K562 (cell line): ENCODE measurements at regions of chr22 and their contacts with region 1.

Region 1: GRCh38 chr22:35627264-35628041 is 10.3 kb upstream of the MB start:
- DNase-seq: peak in 1 of 4 experiments; percentile 35
- ATAC-seq: peak; percentile 39; the same call in 1 of the 3 replicates
- H3K4me3 ChIP-seq: peak overlapping the region; percentile 15; the same call in 1 of the 2 replicates
- H3K27ac ChIP-seq: no peak overlapping the region
- H3K4me1 ChIP-seq: peaks cover 0 to 7% of the 10 kb centered on the region in 2 experiments; a peak in 2 of 5 replicates
- H3K27me3 ChIP-seq: no peaks in the 10 kb centered on the region
- CTCF ChIP-seq: peak; percentile 46 to 65 (median 47); a peak in 5 of 6 replicates
- EP300 ChIP-seq: no peak
- POLR2A ChIP-seq: no peak
- RAD21 ChIP-seq: peak; percentile 33 to 58; a peak in 2 of 4 replicates

Region 2: GRCh38 chr22:35350539-35351503 is 276.6 kb before region 1 on chr22:
- CTCF ChIA-PET with region 1: interaction called, 5 read pairs
- POLR2A ChIA-PET with region 1: no interaction called
- in situ Hi-C with region 1: no loop called
- intact Hi-C with region 1: loop called (anchors 1 kb)
- DNase-seq: peak; percentile 87 to 94 (median 92)
- ATAC-seq: peak; percentile 99
- H3K4me3 ChIP-seq: peak overlapping the region; percentile 45
- H3K27ac ChIP-seq: no peak overlapping the region
- H3K4me1 ChIP-seq: peaks cover 5 to 23% of the 10 kb centered on the region in 2 experiments; a peak in 4 of 5 replicates
- H3K27me3 ChIP-seq: no peaks in the 10 kb centered on the region
- CTCF ChIP-seq: peak; percentile 76 to 82 (median 79)
- EP300 ChIP-seq: no peak
- POLR2A ChIP-seq: no peak
- RAD21 ChIP-seq: peak; percentile 85 to 87

Region 3: GRCh38 chr22:35785181-35785923 is 157.9 kb after region 1 on chr22:
- CTCF ChIA-PET with region 1: no interaction called
- POLR2A ChIA-PET with region 1: no interaction called
- in situ Hi-C with region 1: no loop called
- intact Hi-C with region 1: no loop called
- DNase-seq: no peak
- ATAC-seq: no peak
- H3K4me3 ChIP-seq: no peak overlapping the region
- H3K27ac ChIP-seq: no peak overlapping the region
- H3K4me1 ChIP-seq: no peaks in the 10 kb centered on the region; a peak in 2 of 5 replicates
- H3K27me3 ChIP-seq: no peaks in the 10 kb centered on the region
- CTCF ChIP-seq: no peak
- EP300 ChIP-seq: no peak
- POLR2A ChIP-seq: no peak
- RAD21 ChIP-seq: no peak

Region 4: DNA sequence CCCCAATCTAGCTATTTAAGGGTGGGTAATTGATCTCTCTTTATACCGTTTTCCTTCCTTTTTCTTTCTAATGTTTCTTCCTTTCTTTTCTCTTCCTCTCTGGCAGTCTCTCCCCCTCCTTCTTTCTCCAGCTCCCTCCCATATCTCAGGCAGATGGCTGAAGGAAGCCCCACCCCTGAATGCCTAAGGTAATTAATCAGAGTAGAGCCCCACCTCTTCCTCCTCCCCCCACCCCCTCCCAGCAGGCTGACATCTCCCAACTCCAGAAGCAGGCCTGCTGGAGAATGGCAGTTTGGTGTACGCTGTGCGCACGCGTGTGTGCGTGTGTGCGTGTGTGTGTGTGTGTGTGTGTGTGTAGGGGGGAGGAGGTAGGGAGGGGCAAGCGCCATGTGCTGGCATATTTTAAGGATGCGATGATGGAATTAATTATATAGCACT is 212.9 kb after region 1 on chr22:
- CTCF ChIA-PET with region 1: no interaction called
- POLR2A ChIA-PET with region 1: no interaction called
- in situ Hi-C with region 1: no loop called
- intact Hi-C with region 1: loop called (anchors 10 kb)
- DNase-seq: peak; percentile 83 to 92 (median 85)
- ATAC-seq: peak; percentile 98
- H3K4me3 ChIP-seq: peak overlapping the region; percentile 38
- H3K27ac ChIP-seq: no peak overlapping the region
- H3K4me1 ChIP-seq: peaks cover 3 to 13% of the 10 kb centered on the region in 2 experiments; a peak in 2 of 5 replicates
- H3K27me3 ChIP-seq: no peaks in the 10 kb centered on the region
- CTCF ChIP-seq: no peak
- EP300 ChIP-seq: peak; percentile 20; the same call in 1 of the 2 replicates
- POLR2A ChIP-seq: no peak
- RAD21 ChIP-seq: no peak

Region 5: DNA sequence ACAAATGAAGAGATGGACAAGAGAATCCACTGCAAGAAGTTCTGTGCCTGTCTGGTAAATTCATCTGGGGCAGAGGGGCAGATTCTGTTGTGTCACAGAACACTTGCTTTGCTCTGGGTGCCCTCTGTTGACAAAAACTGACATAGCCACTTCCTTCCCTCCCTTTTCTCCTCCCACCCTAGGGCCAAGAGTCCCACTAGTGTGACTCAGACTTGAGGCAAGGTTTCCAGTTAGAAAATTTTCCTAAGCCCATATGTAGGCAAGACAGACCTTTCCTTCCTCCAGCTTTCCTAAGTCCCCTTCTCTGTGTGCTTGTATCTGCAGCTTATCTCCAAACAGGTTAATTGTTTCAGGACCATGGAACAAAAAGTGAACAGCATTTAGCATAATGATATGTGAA is 294.3 kb after region 1 on chr22:
- CTCF ChIA-PET with region 1: no interaction called
- POLR2A ChIA-PET with region 1: no interaction called
- in situ Hi-C with region 1: loop called (anchors 10 kb)
- intact Hi-C with region 1: loop called (anchors 5 kb)
- DNase-seq: peak; percentile 13 to 74 (median 32)
- ATAC-seq: peak; percentile 92
- H3K4me3 ChIP-seq: no peak overlapping the region
- H3K27ac ChIP-seq: no peak overlapping the region
- H3K4me1 ChIP-seq: no peaks in the 10 kb centered on the region; a peak in 2 of 5 replicates
- H3K27me3 ChIP-seq: no peaks in the 10 kb centered on the region
- CTCF ChIP-seq: peak; percentile 64 to 79 (median 67)
- EP300 ChIP-seq: no peak
- POLR2A ChIP-seq: no peak
- RAD21 ChIP-seq: peak; percentile 81 to 88

Region 6: DNA sequence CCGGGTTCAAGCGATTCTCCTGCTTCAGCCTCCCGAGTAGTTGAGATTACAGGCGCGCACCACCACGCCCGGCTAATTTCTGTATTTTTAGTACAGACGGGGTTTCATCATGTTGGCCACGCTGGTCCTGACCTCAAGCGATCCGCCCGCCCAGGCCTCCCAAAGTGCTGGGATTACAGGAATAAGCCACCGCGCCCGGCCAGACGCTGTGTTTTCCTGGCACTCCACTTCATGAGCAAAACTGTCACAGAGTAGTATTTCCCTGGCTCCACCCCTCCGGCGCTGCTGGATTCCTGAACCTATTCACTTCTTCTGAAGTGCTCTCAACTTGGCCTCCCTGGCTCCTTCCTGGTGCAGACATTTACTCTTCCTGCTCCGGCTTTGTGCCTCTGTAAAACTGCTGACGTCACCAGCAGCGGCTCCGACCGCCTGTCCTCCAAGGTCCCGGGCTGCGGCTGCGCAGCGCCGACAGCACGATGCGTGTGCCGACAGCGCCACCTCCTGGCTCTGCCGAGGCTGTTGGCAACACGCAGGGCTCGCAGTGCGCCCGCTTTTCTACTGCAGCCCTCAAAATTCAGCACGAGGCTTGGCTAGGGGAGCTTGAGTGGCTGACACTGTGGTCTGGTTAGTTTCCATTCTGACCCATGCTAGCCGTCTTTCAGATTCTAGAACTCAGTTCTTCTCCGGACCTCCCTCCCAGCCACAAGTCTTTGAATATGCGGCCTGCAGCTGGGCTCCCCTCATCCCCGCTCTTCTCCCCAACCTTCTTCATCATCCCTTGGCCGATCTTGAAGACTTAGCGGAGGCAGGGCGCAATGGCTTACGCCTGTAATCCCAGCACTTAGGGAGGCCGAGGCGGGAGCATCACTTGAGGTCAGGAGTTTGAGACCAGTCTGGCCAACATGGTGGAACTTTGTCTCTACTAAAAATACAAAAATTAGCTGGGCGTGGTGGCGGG is 496.5 kb after region 1 on chr22:
- CTCF ChIA-PET with region 1: interaction called, 4 read pairs
- POLR2A ChIA-PET with region 1: no interaction called
- in situ Hi-C with region 1: no loop called
- intact Hi-C with region 1: loop called (anchors 2 kb)
- DNase-seq: peak; percentile 80 to 93 (median 88)
- ATAC-seq: peak; percentile 98
- H3K4me3 ChIP-seq: no peak overlapping the region
- H3K27ac ChIP-seq: peak overlapping the region; percentile 73
- H3K4me1 ChIP-seq: peaks cover 2 to 9% of the 10 kb centered on the region in 2 experiments; a peak in 4 of 5 replicates
- H3K27me3 ChIP-seq: peaks cover 0 to 14% of the 10 kb centered on the region in 2 experiments; a peak in 2 of 5 replicates
- CTCF ChIP-seq: peak; percentile 93 to 96 (median 94)
- EP300 ChIP-seq: no peak
- POLR2A ChIP-seq: no peak
- RAD21 ChIP-seq: peak; percentile 97 to 98